ENCODE measurements at regions of chr19 and their contacts with region 1.

Region 1: GRCh38 chr19:27744926-27745768 is 1467.8 kb downstream of the UQCRFS1 start:
- DNase-seq: peak; percentile 65

Region 2: GRCh38 chr19:27672309-27673047 is 72.7 kb before region 1 on chr19:
- intact Hi-C with region 1: loop called (anchors 5 kb)
- DNase-seq: no peak

Region 3: GRCh38 chr19:27793644-27794493 is 48.7 kb after region 1 on chr19:
- intact Hi-C with region 1: loop called (anchors 5 kb)
- DNase-seq: peak; percentile 98